ENCODE measurements at regions of chr1 and their contacts with region 1.

Region 1: GRCh38 chr1:32247983-32248889 is 1.2 kb downstream of the FAM167B start:
- DNase-seq: peak; percentile 73
- H3K4me3 Mint-ChIP-seq: peak overlapping the region; percentile 46
- H3K27ac Mint-ChIP-seq: peak overlapping the region; percentile 95
- H3K4me1 Mint-ChIP-seq: peaks cover 51% of the 10 kb centered on the region
- H3K27me3 Mint-ChIP-seq: no peaks in the 10 kb centered on the region

Region 2: DNA sequence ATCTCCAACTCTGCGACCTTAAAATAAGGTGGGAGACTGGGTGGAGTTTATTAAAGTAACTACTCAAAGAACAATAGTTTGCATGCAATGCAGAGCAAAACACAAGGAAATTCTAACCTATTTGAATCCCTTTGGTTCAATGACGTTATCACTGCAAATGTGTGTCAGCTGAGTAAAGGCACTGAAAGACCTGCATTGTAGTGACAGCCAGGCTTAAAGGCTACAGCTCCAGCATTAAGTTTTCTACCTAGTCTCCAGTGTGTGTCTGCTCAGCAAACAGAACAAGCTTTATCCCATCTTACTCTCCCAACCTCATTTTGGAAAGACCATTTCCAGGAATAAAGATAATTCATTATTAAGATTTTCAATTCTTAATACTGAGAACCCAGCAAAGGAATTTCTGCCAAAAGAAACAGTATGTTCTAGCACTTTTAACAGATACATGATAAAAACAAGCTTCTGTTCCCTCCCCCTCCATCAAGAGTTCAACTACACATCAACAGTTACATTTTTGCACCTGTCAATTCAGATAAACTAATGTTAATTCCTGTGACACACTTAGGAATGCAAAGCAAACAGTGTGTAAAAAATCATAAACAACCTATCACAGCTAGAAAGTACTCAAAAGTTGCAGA is 324.2 kb before region 1 on chr1:
- intact Hi-C with region 1: loop called (anchors 5 kb)
- DNase-seq: no peak
- H3K4me3 Mint-ChIP-seq: peak overlapping the region; percentile 68
- H3K27ac Mint-ChIP-seq: peak overlapping the region; percentile 88
- H3K4me1 Mint-ChIP-seq: peaks cover 83% of the 10 kb centered on the region
- H3K27me3 Mint-ChIP-seq: no peaks in the 10 kb centered on the region

Region 3: DNA sequence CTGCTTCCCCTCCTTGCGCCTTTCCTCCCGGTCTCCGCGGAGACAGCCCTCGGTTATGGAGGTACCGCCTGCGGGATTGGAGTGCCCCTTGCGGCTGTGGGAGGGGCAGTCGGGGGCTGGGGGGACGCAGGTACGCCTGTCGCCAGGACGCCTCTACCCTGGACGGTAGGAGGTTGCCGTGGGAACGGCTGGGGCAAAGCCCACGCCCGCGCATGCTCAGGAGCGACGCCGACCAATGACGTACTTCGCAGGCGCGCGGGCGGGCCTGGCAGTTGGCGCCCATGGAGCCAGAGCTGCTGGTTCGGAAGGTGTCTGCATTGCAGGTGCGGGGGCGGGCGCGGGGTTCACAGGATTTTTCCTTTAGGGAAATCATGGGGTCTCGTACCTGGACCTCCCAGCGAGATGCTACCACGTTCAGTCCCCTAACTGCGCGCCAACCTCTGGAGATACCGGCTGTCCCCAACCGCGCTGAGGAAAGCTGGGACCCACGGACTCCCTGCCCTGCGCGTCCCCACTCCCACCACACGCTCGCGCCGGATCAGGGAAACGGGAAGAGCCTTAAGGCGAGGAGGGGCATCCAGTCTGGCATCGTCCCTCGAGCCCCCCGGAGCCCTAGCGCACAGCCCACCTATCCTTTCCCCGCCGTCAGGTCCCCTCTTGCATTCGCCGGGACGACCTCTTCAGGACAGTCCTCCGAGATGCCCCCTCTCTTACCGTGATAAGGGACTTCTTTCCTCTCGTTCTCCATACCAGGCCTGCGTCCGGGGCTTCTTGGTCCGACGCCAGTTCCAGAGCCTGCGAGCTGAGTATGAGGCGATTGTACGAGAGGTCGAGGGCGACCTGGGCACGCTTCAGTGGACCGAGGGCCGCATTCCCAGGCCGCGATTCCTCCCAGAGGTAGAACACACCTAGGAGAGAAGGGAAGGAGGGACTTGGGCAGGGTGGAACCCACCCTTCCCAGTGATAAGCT is 42.5 kb before region 1 on chr1 and contains the start of gene IQCC:
- intact Hi-C with region 1: loop called (anchors 1 kb)
- DNase-seq: peak; percentile 83
- H3K4me3 Mint-ChIP-seq: peak within 1 kb of the TSS; percentile 90
- H3K27ac Mint-ChIP-seq: peak within 1 kb of the TSS; percentile 80
- H3K4me1 Mint-ChIP-seq: peaks cover 38% of the 10 kb centered on the region
- H3K27me3 Mint-ChIP-seq: no peaks in the 10 kb centered on the region
- total RNA-seq, gene IQCC: 5.7 and 6.0 TPM in 2 replicates

Region 4: GRCh38 chr1:32221980-32222755 is 26.1 kb before region 1 on chr1 and contains the starts of genes EIF3I and TMEM234:
- intact Hi-C with region 1: loop called (anchors 1 kb)
- DNase-seq: peak; percentile 89
- H3K4me3 Mint-ChIP-seq: peak within 1 kb of the TSS; percentile 98
- H3K27ac Mint-ChIP-seq: peak within 1 kb of the TSS; percentile 95
- H3K4me1 Mint-ChIP-seq: peaks cover 25% of the 10 kb centered on the region
- H3K27me3 Mint-ChIP-seq: no peaks in the 10 kb centered on the region
- total RNA-seq, gene EIF3I: 297 TPM in 2 replicates
- total RNA-seq, gene TMEM234: 13.5 and 15.0 TPM in 2 replicates

Region 5: GRCh38 chr1:32321712-32322291 is 73.6 kb after region 1 on chr1:
- intact Hi-C with region 1: loop called (anchors 2 kb)
- DNase-seq: no peak
- H3K4me3 Mint-ChIP-seq: peak overlapping the region; percentile 53
- H3K27ac Mint-ChIP-seq: peak overlapping the region; percentile 83
- H3K4me1 Mint-ChIP-seq: peaks cover 49% of the 10 kb centered on the region
- H3K27me3 Mint-ChIP-seq: no peaks in the 10 kb centered on the region

Region 6: GRCh38 chr1:32981003-32981901 is 733.0 kb after region 1 on chr1:
- intact Hi-C with region 1: loop called (anchors 10 kb)
- DNase-seq: peak; percentile 65
- H3K4me3 Mint-ChIP-seq: peak overlapping the region; percentile 60
- H3K27ac Mint-ChIP-seq: peak overlapping the region; percentile 85
- H3K4me1 Mint-ChIP-seq: peaks cover 81% of the 10 kb centered on the region
- H3K27me3 Mint-ChIP-seq: no peaks in the 10 kb centered on the region

Measured in activated T-helper 1 cell treated with anti-CD3 and anti-CD28 coated beads, Interleukin-12 subunit alpha, Interleukin-12 subunit beta, Interleukin-2, Interleukin-4 antibody, amounts not matched to agents 30 ng/mL and 10 ng/mL and 1 ng/mL, durations not matched to agents 14 hours and 24 hours and 36 hours (primary cell).